K562 (cell line): ENCODE measurements at regions of chr9 and their contacts with region 1.

Region 1: GRCh38 chr9:36625006-36625615 is 52.4 kb downstream of the MELK start:
- DNase-seq: no peak
- ATAC-seq: no peak
- H3K4me3 ChIP-seq: no peak overlapping the region
- H3K27ac ChIP-seq: no peak overlapping the region
- H3K4me1 ChIP-seq: no peaks in the 10 kb centered on the region
- H3K27me3 ChIP-seq: no peaks in the 10 kb centered on the region
- CTCF ChIP-seq: no peak
- EP300 ChIP-seq: no peak
- POLR2A ChIP-seq: no peak
- RAD21 ChIP-seq: no peak

Region 2: GRCh38 chr9:36612946-36613345 is 12.2 kb before region 1 on chr9:
- CTCF ChIA-PET with region 1: no interaction called
- POLR2A ChIA-PET with region 1: interaction called, 12 read pairs
- in situ Hi-C with region 1: no loop called
- intact Hi-C with region 1: no loop called
- DNase-seq: no peak
- ATAC-seq: no peak
- H3K4me3 ChIP-seq: no peak overlapping the region
- H3K27ac ChIP-seq: no peak overlapping the region
- H3K4me1 ChIP-seq: peaks cover 3 to 5% of the 10 kb centered on the region in 2 experiments; a peak in 3 of 5 replicates
- H3K27me3 ChIP-seq: no peaks in the 10 kb centered on the region
- CTCF ChIP-seq: no peak
- EP300 ChIP-seq: no peak
- POLR2A ChIP-seq: no peak
- RAD21 ChIP-seq: no peak